Gastrocnemius medialis (tissue), 4 donors: ENCODE measurements at regions of chrX and their contacts with region 1.

Region 1: DNA sequence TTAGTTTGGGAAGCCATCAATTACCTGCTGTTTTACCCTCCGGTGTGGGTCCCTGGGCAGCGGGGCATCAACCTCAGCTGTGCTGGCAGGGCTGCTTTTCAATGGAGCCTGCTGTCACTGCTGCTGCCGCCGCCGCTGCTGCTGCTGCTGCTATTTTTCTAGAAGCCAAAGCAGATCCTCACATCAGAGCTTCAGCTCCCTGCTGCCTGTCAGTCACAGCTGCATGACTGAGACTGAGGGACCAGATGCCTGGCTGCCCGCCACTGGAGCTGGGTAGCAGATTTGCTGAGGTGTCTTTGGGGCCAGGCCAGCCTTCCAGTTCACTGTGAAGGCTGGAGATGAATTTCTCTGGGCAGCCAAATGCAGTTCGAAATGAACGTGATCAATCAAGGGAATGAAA is 200.3 kb upstream of the NHS start:
- DNase-seq: peak in 1 of 2 donors; percentile 15
- ATAC-seq: no peak
- H3K4me3 ChIP-seq: no peak overlapping the region
- H3K27ac ChIP-seq: no peak overlapping the region
- H3K4me1 ChIP-seq: no peaks in the 10 kb centered on the region
- H3K27me3 ChIP-seq: no peaks in the 10 kb centered on the region
- CTCF ChIP-seq: no peak
- POLR2A ChIP-seq: no peak

Region 2: DNA sequence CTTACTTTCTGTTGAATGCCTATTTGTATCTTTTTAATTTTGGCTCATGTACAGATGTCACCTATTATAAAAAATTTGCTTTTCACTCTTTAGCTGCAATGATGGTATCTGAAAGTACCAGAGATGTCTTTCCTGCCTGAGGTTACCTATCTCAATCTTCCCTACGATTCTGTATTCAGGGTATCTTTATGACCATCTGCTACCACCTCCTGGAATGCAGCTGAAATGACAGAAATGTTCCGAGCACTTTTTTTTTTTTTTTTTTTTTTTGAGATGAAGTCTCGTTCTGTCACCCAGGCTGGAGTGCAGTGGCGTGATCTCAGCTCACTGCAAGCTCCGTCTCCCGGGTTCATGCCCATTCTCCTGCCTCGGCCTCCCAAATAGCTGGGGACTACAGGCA is 91.8 kb before region 1 on chrX:
- in situ Hi-C with region 1: loop called in 1 of 4 experiments (anchors 25 kb)
- intact Hi-C with region 1: no loop called
- DNase-seq: no peak
- ATAC-seq: no peak
- H3K4me3 ChIP-seq: no peak overlapping the region
- H3K27ac ChIP-seq: no peak overlapping the region
- H3K4me1 ChIP-seq: peaks cover under 1 to 8% of the 10 kb centered on the region in 2 donors
- H3K27me3 ChIP-seq: no peaks in the 10 kb centered on the region
- CTCF ChIP-seq: no peak
- POLR2A ChIP-seq: no peak

Region 3: DNA sequence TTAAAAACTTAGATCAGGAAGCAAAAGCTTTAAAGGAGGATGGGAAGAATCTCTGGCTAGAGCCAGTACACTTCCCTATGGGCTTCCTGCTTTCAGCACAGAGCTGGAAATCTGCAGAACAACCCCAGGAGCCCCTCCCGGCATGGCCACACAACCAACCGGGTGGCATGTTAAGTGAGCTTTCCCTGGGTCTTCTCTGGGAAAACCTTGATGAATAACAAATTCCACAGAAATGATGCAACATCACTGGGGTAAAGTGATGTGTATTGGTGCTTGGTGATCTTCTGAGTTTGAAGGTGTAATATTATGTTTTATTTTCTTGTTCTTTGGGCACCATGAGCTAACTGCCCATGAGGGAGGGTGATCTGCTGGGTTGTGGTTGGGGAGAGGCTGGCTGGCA is 222.4 kb after region 1 on chrX:
- in situ Hi-C with region 1: no loop called
- intact Hi-C with region 1: no loop called
- DNase-seq: no peak
- ATAC-seq: no peak
- H3K4me3 ChIP-seq: no peak overlapping the region
- H3K27ac ChIP-seq: no peak overlapping the region
- H3K4me1 ChIP-seq: no peaks in the 10 kb centered on the region
- H3K27me3 ChIP-seq: no peaks in the 10 kb centered on the region
- CTCF ChIP-seq: no peak
- POLR2A ChIP-seq: no peak